PC-9 (cell line): ENCODE measurements at regions of chr10 and their contacts with region 1.

Region 1: GRCh38 chr10:72254813-72255568 is 18.7 kb upstream of the DDIT4 start:
- DNase-seq: peak in 1 of 2 experiments; percentile 59
- H3K4me3 ChIP-seq: no peak overlapping the region
- H3K27ac ChIP-seq: no peak overlapping the region
- H3K4me1 ChIP-seq: peaks cover 34% of the 10 kb centered on the region
- H3K27me3 ChIP-seq: no peaks in the 10 kb centered on the region
- CTCF ChIP-seq: no peak

Region 2: DNA sequence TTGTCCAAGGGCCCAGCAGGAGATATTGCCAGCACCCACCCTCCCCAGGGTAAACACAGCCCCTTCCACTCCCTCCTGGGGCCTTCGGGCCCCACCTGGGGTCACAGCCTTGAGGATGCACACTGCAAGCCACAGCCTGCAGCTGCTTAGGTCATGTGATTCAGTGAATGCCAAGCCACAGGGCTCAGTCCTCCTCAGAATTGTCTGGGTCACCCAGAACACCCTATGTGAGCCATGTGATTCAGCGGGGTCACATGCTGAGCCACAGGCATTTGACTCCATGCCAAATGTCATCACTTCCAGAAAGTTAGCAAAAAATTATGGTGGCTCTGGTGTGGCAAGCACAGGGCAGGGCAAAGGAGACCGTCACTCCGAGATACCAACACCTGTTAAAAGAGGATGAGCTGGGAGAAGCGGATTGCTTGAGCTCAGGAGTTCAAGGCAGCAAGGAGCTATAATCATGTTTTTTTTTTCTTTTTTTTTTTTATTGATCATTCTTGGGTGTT is 386.7 kb before region 1 on chr10:
- CTCF ChIA-PET with region 1: interaction called, 15 read pairs
- POLR2A ChIA-PET with region 1: no interaction called
- intact Hi-C with region 1: no loop called
- DNase-seq: peak; percentile 92 to 95
- H3K4me3 ChIP-seq: no peak overlapping the region
- H3K27ac ChIP-seq: peak overlapping the region; percentile 70
- H3K4me1 ChIP-seq: peaks cover 59% of the 10 kb centered on the region
- H3K27me3 ChIP-seq: no peaks in the 10 kb centered on the region
- CTCF ChIP-seq: no peak

Region 3: GRCh38 chr10:72242675-72243074 is 12.3 kb before region 1 on chr10:
- CTCF ChIA-PET with region 1: no interaction called
- POLR2A ChIA-PET with region 1: interaction called, 10 read pairs
- intact Hi-C with region 1: no loop called
- DNase-seq: no peak
- H3K4me3 ChIP-seq: no peak overlapping the region
- H3K27ac ChIP-seq: peak overlapping the region; percentile 82
- H3K4me1 ChIP-seq: peaks cover 50% of the 10 kb centered on the region
- H3K27me3 ChIP-seq: no peaks in the 10 kb centered on the region
- CTCF ChIP-seq: no peak

Region 4: GRCh38 chr10:72292223-72292691 is 37.3 kb after region 1 on chr10:
- CTCF ChIA-PET with region 1: no interaction called
- POLR2A ChIA-PET with region 1: interaction called, 11 read pairs
- intact Hi-C with region 1: no loop called
- DNase-seq: peak; percentile 91 to 99
- H3K4me3 ChIP-seq: peak overlapping the region; percentile 8; the same call in 1 of the 2 replicates
- H3K27ac ChIP-seq: peak overlapping the region; percentile 93
- H3K4me1 ChIP-seq: peaks cover 54% of the 10 kb centered on the region
- H3K27me3 ChIP-seq: no peaks in the 10 kb centered on the region
- CTCF ChIP-seq: no peak

Region 5: GRCh38 chr10:73060738-73061635 is 806.0 kb after region 1 on chr10:
- CTCF ChIA-PET with region 1: interaction called, 11 read pairs
- POLR2A ChIA-PET with region 1: no interaction called
- intact Hi-C with region 1: no loop called
- DNase-seq: no peak
- H3K4me3 ChIP-seq: no peak overlapping the region
- H3K27ac ChIP-seq: no peak overlapping the region
- H3K4me1 ChIP-seq: no peaks in the 10 kb centered on the region
- H3K27me3 ChIP-seq: no peaks in the 10 kb centered on the region
- CTCF ChIP-seq: peak; percentile 80